Activated CD8-positive, alpha-beta T cell treated with anti-CD3 and anti-CD28 coated beads, Interleukin-2, amount 10 ng/mL, durations not matched to agents 7 days and 5 days (primary cell): ENCODE measurements at regions of chr21 and their contacts with region 1.

Region 1: DNA sequence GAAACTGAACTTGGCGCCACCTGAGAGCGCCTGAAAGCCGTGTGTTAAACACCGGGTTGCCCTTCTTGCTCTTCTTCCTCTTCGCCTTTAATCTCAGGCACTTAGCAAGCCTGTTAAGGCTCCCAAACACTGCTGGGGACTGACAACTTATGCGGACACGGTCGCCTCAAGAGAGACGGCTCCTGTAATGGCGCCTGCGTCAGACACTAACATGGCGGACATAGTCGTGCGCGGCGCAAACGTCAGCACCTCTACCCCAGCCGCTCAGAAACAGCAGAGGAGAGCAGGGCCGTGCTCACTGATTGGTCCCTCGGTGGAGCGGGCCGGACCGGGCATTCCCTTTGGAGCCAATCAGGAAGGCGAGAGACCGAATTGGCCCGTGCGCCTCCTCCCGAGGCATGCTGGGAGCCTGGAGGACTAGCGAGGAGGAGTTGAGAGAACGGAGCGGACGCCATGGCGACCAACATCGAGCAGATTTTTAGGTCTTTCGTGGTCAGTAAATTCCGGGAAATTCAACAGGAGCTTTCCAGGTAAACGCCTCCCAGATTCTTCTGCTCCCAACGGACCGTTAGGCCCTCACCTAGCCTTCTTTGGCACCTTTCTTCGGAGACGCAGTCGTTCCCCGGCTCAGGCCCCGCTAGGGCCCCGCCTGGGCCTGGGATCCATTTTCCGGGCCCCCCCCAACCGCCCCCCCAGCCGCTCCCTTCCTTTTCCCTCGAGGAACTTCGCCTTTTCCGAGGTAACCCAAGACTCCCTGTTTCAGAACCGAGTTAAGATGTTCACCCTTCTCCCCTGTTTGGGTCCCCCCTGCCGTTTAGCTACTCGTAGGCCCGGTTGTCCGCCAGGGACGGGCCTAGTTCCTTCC is at the start of gene SON:
- DNase-seq: peak; percentile 99
- ATAC-seq: peak; percentile 95
- H3K4me3 Mint-ChIP-seq: peak within 1 kb of the TSS; percentile 95
- H3K27ac Mint-ChIP-seq: peak within 1 kb of the TSS; percentile 99
- H3K4me1 Mint-ChIP-seq: peaks cover 32% of the 10 kb centered on the region
- H3K27me3 Mint-ChIP-seq: no peaks in the 10 kb centered on the region
- total RNA-seq, gene SON: 284 to 285 TPM

Region 2: GRCh38 chr21:33121715-33122475 is 421.0 kb before region 1 on chr21:
- CTCF ChIA-PET with region 1: no interaction called
- POLR2A ChIA-PET with region 1: no interaction called
- DNase-seq: no peak
- ATAC-seq: no peak
- H3K4me3 Mint-ChIP-seq: no peak overlapping the region
- H3K27ac Mint-ChIP-seq: no peak overlapping the region
- H3K4me1 Mint-ChIP-seq: peaks cover 3% of the 10 kb centered on the region
- H3K27me3 Mint-ChIP-seq: peaks cover 14% of the 10 kb centered on the region

Region 3: DNA sequence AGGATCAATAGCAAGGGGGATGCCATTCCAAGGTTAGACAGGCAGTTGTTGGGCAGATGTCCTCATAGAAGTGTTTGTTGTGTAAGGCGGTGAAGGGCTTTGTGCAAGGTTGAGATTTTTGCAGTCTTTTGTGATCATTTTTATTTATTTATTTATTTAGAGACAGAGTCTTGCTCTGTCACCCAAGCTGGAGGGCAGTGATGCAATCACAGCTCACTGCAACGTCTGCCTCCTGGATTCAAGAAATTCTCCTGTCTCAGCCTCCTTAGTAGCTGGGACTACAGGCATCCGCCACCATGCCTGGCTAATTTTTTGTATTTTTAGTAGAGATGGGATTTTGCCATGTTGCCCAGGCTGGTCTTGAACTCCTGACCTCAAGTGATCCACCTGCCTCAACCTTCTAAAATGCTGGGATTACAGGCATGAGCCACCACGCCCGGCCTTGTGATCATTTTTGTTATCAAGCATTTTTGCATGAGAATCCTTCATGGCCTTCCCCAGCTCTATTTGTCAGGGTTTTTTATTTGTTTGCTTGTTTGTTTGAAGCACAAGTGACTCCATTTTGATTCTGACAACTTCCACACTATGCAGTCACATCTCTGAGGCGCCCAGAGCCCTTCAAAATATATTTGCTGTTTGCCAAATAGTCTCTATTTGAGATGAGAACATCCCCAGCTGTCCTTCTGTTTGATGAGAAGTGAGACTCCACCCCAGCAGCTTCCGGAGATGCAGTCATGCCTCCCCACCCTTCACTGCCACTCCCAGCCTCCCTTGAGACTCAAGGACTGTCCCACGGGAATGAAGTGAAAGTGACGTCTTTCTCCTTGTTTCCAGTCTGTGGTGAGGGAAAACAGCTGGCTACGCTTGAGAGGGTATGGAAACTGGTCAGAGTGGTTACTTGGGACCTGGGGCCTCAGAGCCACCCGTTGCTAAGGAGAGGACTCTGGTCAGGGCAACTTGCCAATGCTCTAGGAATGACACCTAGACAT is 101.1 kb before region 1 on chr21:
- CTCF ChIA-PET with region 1: no interaction called
- POLR2A ChIA-PET with region 1: no interaction called
- DNase-seq: no peak
- ATAC-seq: no peak
- H3K4me3 Mint-ChIP-seq: no peak overlapping the region
- H3K27ac Mint-ChIP-seq: peak overlapping the region; percentile 33
- H3K4me1 Mint-ChIP-seq: peaks cover 5% of the 10 kb centered on the region
- H3K27me3 Mint-ChIP-seq: no peaks in the 10 kb centered on the region

Region 4: DNA sequence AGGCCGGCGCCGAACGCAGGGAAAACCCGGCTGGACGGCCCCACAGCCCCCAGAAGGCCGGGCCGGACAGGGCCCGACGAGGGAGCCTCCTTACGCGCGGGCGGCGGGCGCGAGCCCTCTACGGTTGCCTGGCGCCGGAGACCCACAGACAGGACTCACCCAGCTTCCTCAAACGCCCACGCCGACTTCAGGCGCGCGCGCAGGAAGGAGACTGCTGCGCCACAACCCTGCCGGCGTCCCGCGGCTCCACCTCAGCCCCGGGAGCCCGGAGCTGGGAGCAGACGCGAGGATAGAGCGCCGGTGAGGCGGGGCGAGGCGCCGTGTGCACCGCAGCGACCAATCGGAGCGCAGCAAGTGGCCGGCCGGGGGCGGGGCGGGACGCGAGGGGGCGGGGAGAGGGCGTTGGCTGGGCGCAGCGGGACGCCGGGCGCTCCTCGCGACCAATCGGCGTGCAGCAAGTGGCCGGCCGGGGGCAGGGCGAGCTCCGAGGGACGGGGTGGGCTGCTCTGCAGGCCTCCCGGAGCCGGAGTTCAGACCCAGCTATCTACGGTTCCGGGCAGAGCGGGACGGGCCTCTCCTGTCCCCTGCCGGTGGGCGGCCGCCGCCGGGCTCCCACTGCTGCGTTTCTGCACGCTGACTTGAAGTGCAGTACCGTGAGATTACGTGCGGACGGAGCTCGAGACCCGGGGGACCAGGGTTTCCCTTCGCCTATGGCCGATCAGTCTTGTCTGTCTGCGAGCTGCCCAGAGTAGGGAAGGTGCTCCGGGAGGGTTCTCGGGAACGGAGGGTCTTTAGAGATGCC is 63.0 kb before region 1 on chr21 and contains the start of gene TMEM50B:
- CTCF ChIA-PET with region 1: interaction called, 6 read pairs
- POLR2A ChIA-PET with region 1: interaction called, 32 read pairs
- DNase-seq: peak; percentile 96
- ATAC-seq: peak; percentile 95
- H3K4me3 Mint-ChIP-seq: peak within 1 kb of the TSS; percentile 93
- H3K27ac Mint-ChIP-seq: peak within 1 kb of the TSS; percentile 94
- H3K4me1 Mint-ChIP-seq: peaks cover 26% of the 10 kb centered on the region
- H3K27me3 Mint-ChIP-seq: peaks cover 2% of the 10 kb centered on the region
- total RNA-seq, gene TMEM50B: 34.9 to 37.5 TPM

Region 5: GRCh38 chr21:33578959-33579542 is 36.2 kb after region 1 on chr21:
- CTCF ChIA-PET with region 1: interaction called, 8 read pairs
- POLR2A ChIA-PET with region 1: interaction called, 11 read pairs
- DNase-seq: no peak
- ATAC-seq: no peak
- H3K4me3 Mint-ChIP-seq: no peak overlapping the region
- H3K27ac Mint-ChIP-seq: peak overlapping the region; percentile 39
- H3K4me1 Mint-ChIP-seq: peaks cover 9% of the 10 kb centered on the region
- H3K27me3 Mint-ChIP-seq: no peaks in the 10 kb centered on the region

Region 6: DNA sequence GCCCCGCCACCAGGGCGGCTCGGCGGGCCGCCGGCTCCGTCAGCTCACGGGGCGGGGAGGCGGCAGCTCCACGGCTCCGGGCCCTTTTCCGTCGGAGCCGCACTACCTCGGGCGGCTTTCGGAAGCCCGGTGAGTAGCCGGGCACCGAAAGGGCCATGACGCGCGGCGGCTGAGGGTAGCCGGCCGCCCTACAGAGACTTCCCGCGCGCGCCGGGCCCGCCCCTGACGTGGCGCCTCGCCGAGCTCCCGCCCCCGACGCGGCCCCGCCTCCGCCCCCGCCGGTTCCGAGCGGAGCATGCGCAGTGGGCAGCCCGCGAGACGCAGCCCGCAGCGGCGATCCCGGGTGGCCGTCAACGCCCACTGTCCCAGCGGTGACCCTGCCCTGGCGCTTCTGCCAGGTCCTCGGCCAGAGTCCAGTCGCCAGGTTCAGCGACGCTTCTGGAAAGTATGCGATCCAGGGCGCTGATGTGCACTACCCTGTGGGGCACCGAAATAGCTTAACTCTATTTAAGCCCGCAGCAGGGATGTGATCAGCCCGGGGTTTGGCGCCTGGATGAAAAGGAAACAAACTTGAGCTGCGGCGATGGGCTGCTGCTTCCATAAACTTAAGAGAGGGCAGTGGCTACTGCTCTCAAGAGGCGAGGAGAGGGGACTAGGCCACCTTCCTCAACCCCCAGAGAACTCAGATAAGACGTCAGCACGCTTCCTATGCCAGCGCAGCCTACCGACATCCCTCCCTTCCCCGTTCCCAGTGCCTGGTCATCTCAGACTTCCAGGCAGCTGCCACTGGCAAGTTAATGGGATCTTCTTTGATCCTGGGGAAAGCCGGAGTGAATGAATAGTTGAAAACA is 45.8 kb after region 1 on chr21 and contains the start of gene DONSON:
- CTCF ChIA-PET with region 1: interaction called, 8 read pairs
- POLR2A ChIA-PET with region 1: interaction called, 13 read pairs
- DNase-seq: peak; percentile 88
- ATAC-seq: peak; percentile 96
- H3K4me3 Mint-ChIP-seq: peak within 1 kb of the TSS; percentile 91
- H3K27ac Mint-ChIP-seq: peak within 1 kb of the TSS; percentile 89
- H3K4me1 Mint-ChIP-seq: peaks cover 26% of the 10 kb centered on the region
- H3K27me3 Mint-ChIP-seq: no peaks in the 10 kb centered on the region
- total RNA-seq, gene DONSON: 43.3 to 44.1 TPM